ENCODE measurements at regions of chr5 and their contacts with region 1.

Region 1: DNA sequence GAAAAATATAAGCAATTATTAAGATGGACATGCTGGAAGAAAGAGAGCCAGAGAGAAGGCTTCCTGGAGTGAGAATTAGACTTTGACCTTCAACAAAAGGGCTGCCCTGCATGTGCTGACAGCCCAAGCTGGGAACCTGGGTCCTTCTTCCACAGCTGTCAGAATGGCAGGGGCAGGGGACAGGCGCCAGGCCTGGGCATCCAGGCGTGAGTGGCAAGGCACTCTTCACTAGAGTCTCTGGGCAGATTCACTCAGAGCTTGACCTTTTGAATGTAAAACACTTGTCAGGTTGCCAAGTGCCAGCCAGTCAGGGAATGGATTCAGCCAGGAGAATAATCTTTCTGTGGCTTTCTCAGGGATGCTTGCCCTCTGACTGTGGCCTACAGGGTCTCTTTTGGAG is 119.1 kb upstream of the CLINT1 start:
- DNase-seq: no peak
- ATAC-seq: no peak
- H3K4me3 ChIP-seq: no peak overlapping the region
- H3K4me3 Mint-ChIP-seq: no peak overlapping the region
- H3K27ac ChIP-seq: no peak overlapping the region
- H3K27ac Mint-ChIP-seq: no peak overlapping the region
- H3K4me1 ChIP-seq: no peaks in the 10 kb centered on the region
- H3K4me1 Mint-ChIP-seq: no peaks in the 10 kb centered on the region
- H3K27me3 ChIP-seq: no peaks in the 10 kb centered on the region
- H3K27me3 Mint-ChIP-seq: peaks cover 23 to 30% of the 10 kb centered on the region in 2 donors

Region 2: DNA sequence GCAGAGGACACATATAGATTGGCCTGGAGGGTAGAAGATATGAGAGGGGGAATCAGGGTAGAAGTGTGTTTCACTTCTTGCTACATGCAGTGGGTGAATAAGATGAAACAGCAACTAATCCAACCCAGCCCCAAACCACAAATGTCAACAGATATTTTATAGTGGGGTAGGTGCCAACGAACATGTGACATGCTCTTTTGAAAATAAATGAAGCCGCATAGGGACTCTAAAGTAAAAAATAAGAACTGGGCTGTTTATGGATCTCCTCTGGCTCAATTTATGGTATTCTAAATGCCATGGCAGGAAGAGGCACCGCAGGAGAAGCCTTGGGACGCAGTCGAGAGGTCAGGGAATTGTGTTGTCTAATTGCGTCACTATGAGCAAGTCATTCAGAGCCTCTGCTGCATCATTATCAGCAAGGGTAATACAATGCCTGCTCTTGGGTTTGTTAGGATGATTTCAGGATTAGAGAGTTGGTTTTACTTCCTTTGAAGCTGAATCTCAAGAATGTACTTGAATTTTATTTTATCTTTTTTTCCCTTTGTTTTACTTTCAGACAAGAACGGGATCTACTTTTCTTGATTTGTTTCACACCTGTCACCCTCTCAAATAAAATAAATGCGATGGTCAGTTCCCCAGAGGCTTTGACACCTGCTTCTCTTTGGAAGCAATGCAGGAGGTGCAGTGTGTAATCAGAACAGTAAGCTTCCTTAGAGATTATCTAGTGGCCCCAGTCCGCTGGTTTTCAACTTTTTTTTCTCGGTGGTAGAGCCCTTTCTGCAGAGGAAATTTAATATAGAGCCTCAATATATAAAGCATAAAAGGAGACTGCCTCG is 256.5 kb after region 1 on chr5:
- CTCF ChIA-PET with region 1: interaction called in 1 of 2 experiments, 13 read pairs
- POLR2A ChIA-PET with region 1: no interaction called
- DNase-seq: no peak
- ATAC-seq: no peak
- H3K4me3 ChIP-seq: no peak overlapping the region
- H3K4me3 Mint-ChIP-seq: peak overlapping the region in 1 of 3 donors; percentile 3
- H3K27ac ChIP-seq: no peak overlapping the region
- H3K27ac Mint-ChIP-seq: no peak overlapping the region
- H3K4me1 ChIP-seq: peaks cover 0 to 12% of the 10 kb centered on the region in 2 experiments
- H3K4me1 Mint-ChIP-seq: peaks cover 6 to 15% (median 10%) of the 10 kb centered on the region in 3 donors
- H3K27me3 ChIP-seq: no peaks in the 10 kb centered on the region
- H3K27me3 Mint-ChIP-seq: peaks cover 0 to 3% of the 10 kb centered on the region in 2 donors